Mammary epithelial cell (primary cell): ENCODE measurements at regions of chr1 and their contacts with region 1.

Region 1: GRCh38 chr1:17335821-17336710 is 28.1 kb downstream of the PADI4 start:
- DNase-seq: peak; percentile 50
- H3K4me3 ChIP-seq: no peak overlapping the region
- H3K27ac ChIP-seq: no peak overlapping the region
- H3K4me1 ChIP-seq: peaks cover 11% of the 10 kb centered on the region
- H3K27me3 ChIP-seq: no peaks in the 10 kb centered on the region
- CTCF ChIP-seq: peak; percentile 93 to 94

Region 2: DNA sequence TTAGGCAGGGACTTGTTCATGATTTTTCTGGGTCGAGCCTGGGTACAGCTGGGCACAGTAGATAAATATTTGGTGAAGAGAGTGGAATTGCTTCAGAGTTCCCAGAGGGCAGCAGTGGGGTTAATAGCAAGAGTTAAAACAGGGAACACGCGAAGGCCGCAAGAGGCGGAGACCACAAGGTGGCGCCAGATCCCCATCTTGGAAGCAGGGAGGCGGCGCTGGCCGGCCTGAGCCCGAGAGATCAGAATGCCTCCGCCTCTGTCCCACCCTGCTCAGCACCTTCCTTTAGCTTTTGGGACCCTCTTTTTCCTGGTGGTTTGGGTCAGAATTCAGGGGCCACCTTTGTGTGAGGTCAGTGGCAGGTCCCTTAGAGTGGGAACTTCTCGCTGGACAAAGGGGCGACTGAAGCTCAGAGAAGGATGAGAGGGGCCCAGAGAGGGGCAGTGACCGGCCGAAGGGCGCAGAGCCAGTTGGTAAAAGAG is 210.3 kb before region 1 on chr1:
- CTCF ChIA-PET with region 1: no interaction called
- dilution Hi-C with region 1: no loop called
- in situ Hi-C with region 1: loop called (anchors 5 to 10 kb)
- intact Hi-C with region 1: loop called (anchors 1 kb)
- DNase-seq: peak; percentile 61
- H3K4me3 ChIP-seq: no peak overlapping the region
- H3K27ac ChIP-seq: no peak overlapping the region
- H3K4me1 ChIP-seq: peaks cover 31% of the 10 kb centered on the region
- H3K27me3 ChIP-seq: no peaks in the 10 kb centered on the region
- CTCF ChIP-seq: peak; percentile 86 to 96

Region 3: GRCh38 chr1:17190010-17190995 is 145.8 kb before region 1 on chr1:
- CTCF ChIA-PET with region 1: no interaction called
- dilution Hi-C with region 1: no loop called
- in situ Hi-C with region 1: no loop called
- intact Hi-C with region 1: no loop called
- DNase-seq: peak; percentile 92
- H3K4me3 ChIP-seq: no peak overlapping the region
- H3K27ac ChIP-seq: peak overlapping the region; percentile 64
- H3K4me1 ChIP-seq: peaks cover 61% of the 10 kb centered on the region
- H3K27me3 ChIP-seq: no peaks in the 10 kb centered on the region
- CTCF ChIP-seq: no peak

Region 4: GRCh38 chr1:17201201-17202021 is 134.7 kb before region 1 on chr1:
- CTCF ChIA-PET with region 1: no interaction called
- dilution Hi-C with region 1: no loop called
- in situ Hi-C with region 1: no loop called
- intact Hi-C with region 1: no loop called
- DNase-seq: no peak
- H3K4me3 ChIP-seq: no peak overlapping the region
- H3K27ac ChIP-seq: no peak overlapping the region
- H3K4me1 ChIP-seq: peaks cover 16% of the 10 kb centered on the region
- H3K27me3 ChIP-seq: no peaks in the 10 kb centered on the region
- CTCF ChIP-seq: no peak

Region 5: GRCh38 chr1:17265162-17265561 is 70.9 kb before region 1 on chr1:
- CTCF ChIA-PET with region 1: interaction called, 4 read pairs
- dilution Hi-C with region 1: no loop called
- in situ Hi-C with region 1: no loop called
- intact Hi-C with region 1: loop called (anchors 1 kb)
- DNase-seq: peak; percentile 69
- H3K4me3 ChIP-seq: no peak overlapping the region
- H3K27ac ChIP-seq: peak overlapping the region; percentile 34
- H3K4me1 ChIP-seq: peaks cover 33% of the 10 kb centered on the region
- H3K27me3 ChIP-seq: no peaks in the 10 kb centered on the region
- CTCF ChIP-seq: peak; percentile 3 to 37

Region 6: GRCh38 chr1:17287130-17287776 is 48.8 kb before region 1 on chr1:
- CTCF ChIA-PET with region 1: no interaction called
- dilution Hi-C with region 1: no loop called
- in situ Hi-C with region 1: no loop called
- intact Hi-C with region 1: loop called (anchors 1 kb)
- DNase-seq: peak; percentile 96
- H3K4me3 ChIP-seq: no peak overlapping the region
- H3K27ac ChIP-seq: no peak overlapping the region
- H3K4me1 ChIP-seq: peaks cover 47% of the 10 kb centered on the region
- H3K27me3 ChIP-seq: no peaks in the 10 kb centered on the region
- CTCF ChIP-seq: no peak

Region 7: DNA sequence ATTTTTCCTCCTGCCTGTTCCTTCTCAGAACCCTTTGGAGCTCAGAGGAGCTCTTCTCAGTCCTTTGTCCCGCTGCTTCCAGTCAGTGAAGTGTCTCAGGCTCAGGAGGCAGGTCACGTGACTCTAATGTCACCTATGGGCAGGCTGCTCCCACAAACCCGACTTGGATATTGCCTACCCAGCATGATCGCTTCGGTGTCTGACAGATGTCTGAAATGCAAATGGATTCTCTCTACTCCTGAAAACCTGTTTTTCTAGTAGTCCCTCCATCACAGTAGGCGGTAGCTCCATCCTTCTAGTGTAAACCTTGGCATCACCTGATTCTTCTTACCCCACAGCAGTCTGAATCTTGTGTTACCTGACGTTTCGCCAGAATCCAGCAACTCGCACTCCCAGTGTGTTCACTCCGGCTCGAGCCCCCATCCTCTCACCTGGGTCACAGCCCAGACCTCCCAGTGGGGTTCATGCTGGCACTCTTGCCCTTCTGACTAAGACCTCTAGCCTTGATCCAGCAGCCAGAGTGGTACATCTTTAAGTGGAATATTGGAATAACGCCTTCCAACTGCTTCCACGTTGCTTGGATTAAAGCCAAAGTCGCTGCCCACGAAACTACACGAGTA is 41.4 kb after region 1 on chr1:
- CTCF ChIA-PET with region 1: no interaction called
- dilution Hi-C with region 1: no loop called
- in situ Hi-C with region 1: no loop called
- intact Hi-C with region 1: no loop called
- DNase-seq: peak; percentile 11
- H3K4me3 ChIP-seq: no peak overlapping the region
- H3K27ac ChIP-seq: no peak overlapping the region
- H3K4me1 ChIP-seq: no peaks in the 10 kb centered on the region
- H3K27me3 ChIP-seq: no peaks in the 10 kb centered on the region
- CTCF ChIP-seq: no peak

Region 8: GRCh38 chr1:17405898-17406759 is 70.1 kb after region 1 on chr1:
- CTCF ChIA-PET with region 1: no interaction called
- dilution Hi-C with region 1: no loop called
- in situ Hi-C with region 1: no loop called
- intact Hi-C with region 1: loop called (anchors 1 kb)
- DNase-seq: peak; percentile 32
- H3K4me3 ChIP-seq: no peak overlapping the region
- H3K27ac ChIP-seq: no peak overlapping the region
- H3K4me1 ChIP-seq: peaks cover 19% of the 10 kb centered on the region
- H3K27me3 ChIP-seq: no peaks in the 10 kb centered on the region
- CTCF ChIP-seq: peak; percentile 79 to 83